Prostate gland (tissue), 2 donors: ENCODE measurements at regions of chr5 and their contacts with region 1.

Region 1: GRCh38 chr5:61933787-61934626 is 372.0 kb upstream of the KIF2A start:
- DNase-seq: peak; percentile 80
- H3K4me3 ChIP-seq: no peak overlapping the region
- H3K27ac ChIP-seq: no peak overlapping the region
- H3K4me1 ChIP-seq: no peaks in the 10 kb centered on the region
- H3K27me3 ChIP-seq: no peaks in the 10 kb centered on the region
- CTCF ChIP-seq: peak; percentile 33 to 80 (median 76)
- POLR2A ChIP-seq: no peak

Region 2: DNA sequence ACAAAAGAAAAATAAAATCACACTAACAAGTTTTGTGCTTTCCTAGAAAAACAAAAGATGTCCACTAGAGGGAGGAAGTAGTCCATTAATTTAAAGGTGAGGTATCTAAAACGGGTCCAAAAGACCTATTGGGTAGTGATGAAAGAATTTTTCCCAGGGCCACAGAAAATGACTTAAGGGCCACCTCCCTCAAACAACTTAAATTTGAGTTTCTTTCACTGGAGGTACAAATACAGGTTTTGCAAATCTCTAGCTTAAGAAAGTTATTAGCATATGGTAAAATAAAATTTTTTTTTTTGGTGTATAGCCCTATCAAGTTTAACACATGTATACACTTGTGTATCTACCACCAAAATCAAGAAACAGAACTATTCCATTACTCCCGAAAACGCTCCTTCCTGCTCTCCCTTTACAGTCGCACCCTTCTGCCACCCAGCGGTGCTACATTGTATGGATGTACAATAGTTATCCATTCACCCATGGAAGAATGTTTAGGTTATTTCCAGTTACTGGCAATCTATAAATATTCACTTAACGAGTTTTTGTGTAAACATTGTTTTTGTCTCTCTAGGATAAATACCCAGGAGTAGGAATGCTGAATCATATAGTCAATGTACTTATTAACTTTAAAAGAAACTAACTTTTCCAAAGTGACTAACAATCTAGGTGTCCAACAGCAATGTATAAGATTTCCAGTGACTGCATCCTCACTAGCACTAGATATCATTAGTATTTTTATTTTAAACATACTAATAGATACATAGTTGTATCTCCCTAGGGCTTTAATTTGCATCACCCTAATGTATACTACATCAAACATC is 1256.0 kb before region 1 on chr5:
- intact Hi-C with region 1: loop called (anchors 10 kb)
- DNase-seq: no peak
- H3K4me3 ChIP-seq: no peak overlapping the region
- H3K27ac ChIP-seq: no peak overlapping the region
- H3K4me1 ChIP-seq: no peaks in the 10 kb centered on the region
- H3K27me3 ChIP-seq: no peaks in the 10 kb centered on the region
- CTCF ChIP-seq: peak in 3 of 4 experiments; percentile 56 to 65 (median 61)
- POLR2A ChIP-seq: no peak

Region 3: GRCh38 chr5:60959156-60959555 is 974.9 kb before region 1 on chr5:
- intact Hi-C with region 1: loop called (anchors 10 kb)
- DNase-seq: no peak
- H3K4me3 ChIP-seq: no peak overlapping the region
- H3K27ac ChIP-seq: no peak overlapping the region
- H3K4me1 ChIP-seq: no peaks in the 10 kb centered on the region
- H3K27me3 ChIP-seq: no peaks in the 10 kb centered on the region
- CTCF ChIP-seq: peak in 2 of 4 experiments; percentile 10 to 23
- POLR2A ChIP-seq: no peak

Region 4: DNA sequence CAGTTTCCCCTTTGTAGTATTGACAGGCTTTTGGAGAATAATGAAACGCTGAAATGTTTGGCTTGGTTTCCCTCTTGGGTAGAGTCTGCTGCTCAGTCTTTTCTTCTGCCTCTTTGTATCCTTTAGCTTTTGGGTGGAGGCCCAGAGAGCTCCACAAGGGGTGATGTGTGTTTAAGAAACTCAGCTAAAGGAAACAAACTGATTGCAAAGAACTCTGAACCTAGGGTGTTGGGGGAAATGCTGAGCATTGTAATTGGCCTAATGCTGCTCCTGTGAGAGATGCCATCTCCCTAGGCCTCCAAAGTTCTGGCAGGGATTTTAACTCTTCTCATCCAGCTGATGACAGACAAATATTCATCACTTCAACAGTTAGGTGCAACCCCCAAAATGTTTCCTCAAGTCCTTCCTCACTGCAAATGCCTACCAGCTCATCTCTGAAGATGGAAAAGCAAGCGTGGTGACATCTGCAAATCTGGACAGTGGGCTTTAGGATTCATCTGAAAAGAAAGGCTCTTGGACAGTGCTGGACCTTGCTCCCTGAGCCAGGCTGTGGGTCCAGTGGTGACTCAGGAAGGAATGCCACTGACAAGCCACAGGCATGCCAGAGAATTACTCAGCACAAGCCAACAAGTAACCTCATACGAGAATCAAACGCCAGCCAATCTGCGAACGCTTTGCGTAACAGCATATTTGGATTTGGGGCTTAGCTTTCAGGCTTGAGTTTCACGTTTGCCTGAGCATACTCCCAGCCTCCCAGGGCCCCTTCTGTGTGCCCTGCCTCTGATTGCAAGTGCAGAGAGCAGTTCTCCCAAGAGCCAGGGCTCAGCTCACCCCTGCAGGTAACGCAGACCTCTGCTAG is 632.4 kb before region 1 on chr5:
- intact Hi-C with region 1: no loop called
- DNase-seq: peak; percentile 90
- H3K4me3 ChIP-seq: no peak overlapping the region
- H3K27ac ChIP-seq: peak overlapping the region; percentile 68 to 69
- H3K4me1 ChIP-seq: no peaks in the 10 kb centered on the region
- H3K27me3 ChIP-seq: no peaks in the 10 kb centered on the region
- CTCF ChIP-seq: no peak
- POLR2A ChIP-seq: peak; percentile 67